Common myeloid progenitor, CD34-positive (primary cell): ENCODE measurements at regions of chr20 and their contacts with region 1.

Region 1: DNA sequence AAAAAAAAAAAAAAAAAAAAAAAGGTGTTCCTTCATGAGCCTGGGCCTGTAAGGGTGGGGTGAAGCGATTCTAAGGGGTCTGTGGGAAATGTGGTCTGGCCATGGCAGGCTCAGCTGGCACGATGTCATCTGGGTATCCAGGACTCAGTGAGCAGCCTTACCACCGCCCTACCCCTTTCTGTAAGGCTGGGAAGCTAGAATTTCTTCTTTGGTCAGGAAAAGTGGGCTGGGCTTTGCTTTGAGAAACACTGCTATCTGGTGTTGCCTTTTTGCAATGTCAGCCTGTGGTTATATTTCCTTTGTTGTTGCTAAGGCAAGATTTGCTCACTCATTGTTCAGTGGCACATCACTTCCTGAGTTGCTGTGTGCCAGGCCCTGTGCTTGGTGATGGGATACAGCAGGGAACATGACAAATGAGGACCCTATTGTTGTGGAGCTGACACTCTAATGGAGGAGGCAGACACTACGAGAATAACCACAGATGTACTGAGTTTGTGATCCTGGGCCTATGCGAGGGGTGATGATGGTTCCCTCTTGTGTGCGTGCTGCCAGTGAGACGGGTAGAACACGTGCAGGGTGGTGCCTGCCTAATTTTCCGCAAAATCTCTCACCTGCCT is 45.9 kb upstream of the ZNFX1 start:
- DNase-seq: peak; percentile 94 to 99 (median 98)
- H3K4me3 ChIP-seq: peak overlapping the region in 1 of 7 experiments; percentile 28
- H3K27ac ChIP-seq: peak overlapping the region; percentile 74 to 82
- H3K4me1 ChIP-seq: peaks cover 0 to 38% (median 21%) of the 10 kb centered on the region in 4 experiments
- H3K27me3 ChIP-seq: peaks cover 0 to 22% (median 7%) of the 10 kb centered on the region in 5 experiments

Region 2: GRCh38 chr20:48889144-48890114 is 434.3 kb before region 1 on chr20:
- CTCF ChIA-PET with region 1: no interaction called
- POLR2A ChIA-PET with region 1: no interaction called
- DNase-seq: no peak
- H3K4me3 ChIP-seq: no peak overlapping the region
- H3K27ac ChIP-seq: no peak overlapping the region
- H3K4me1 ChIP-seq: peaks cover 0 to 9% (median 0%) of the 10 kb centered on the region in 4 experiments
- H3K27me3 ChIP-seq: no peaks in the 10 kb centered on the region

Region 3: GRCh38 chr20:49063279-49063678 is 260.5 kb before region 1 on chr20:
- CTCF ChIA-PET with region 1: no interaction called
- POLR2A ChIA-PET with region 1: no interaction called
- DNase-seq: no peak
- H3K4me3 ChIP-seq: no peak overlapping the region
- H3K27ac ChIP-seq: no peak overlapping the region
- H3K4me1 ChIP-seq: no peaks in the 10 kb centered on the region
- H3K27me3 ChIP-seq: no peaks in the 10 kb centered on the region

Region 4: GRCh38 chr20:49278036-49278817 is 45.5 kb before region 1 on chr20 and contains the start of gene ZNFX1:
- CTCF ChIA-PET with region 1: interaction called, 14 read pairs
- POLR2A ChIA-PET with region 1: interaction called, 6 read pairs
- DNase-seq: peak; percentile 98 to 99 (median 99)
- H3K4me3 ChIP-seq: peak within 1 kb of the TSS; percentile 90 to 98 (median 93)
- H3K27ac ChIP-seq: peak within 1 kb of the TSS; percentile 89 to 97
- H3K4me1 ChIP-seq: peaks cover 10 to 42% (median 31%) of the 10 kb centered on the region in 4 experiments
- H3K27me3 ChIP-seq: no peaks in the 10 kb centered on the region

Region 5: GRCh38 chr20:49349694-49350093 is 26.0 kb after region 1 on chr20:
- CTCF ChIA-PET with region 1: no interaction called
- POLR2A ChIA-PET with region 1: no interaction called
- DNase-seq: no peak
- H3K4me3 ChIP-seq: no peak overlapping the region
- H3K27ac ChIP-seq: no peak overlapping the region
- H3K4me1 ChIP-seq: peaks cover 0 to 6% (median 4%) of the 10 kb centered on the region in 4 experiments
- H3K27me3 ChIP-seq: peaks cover 0 to 18% (median 2%) of the 10 kb centered on the region in 5 experiments

Region 6: DNA sequence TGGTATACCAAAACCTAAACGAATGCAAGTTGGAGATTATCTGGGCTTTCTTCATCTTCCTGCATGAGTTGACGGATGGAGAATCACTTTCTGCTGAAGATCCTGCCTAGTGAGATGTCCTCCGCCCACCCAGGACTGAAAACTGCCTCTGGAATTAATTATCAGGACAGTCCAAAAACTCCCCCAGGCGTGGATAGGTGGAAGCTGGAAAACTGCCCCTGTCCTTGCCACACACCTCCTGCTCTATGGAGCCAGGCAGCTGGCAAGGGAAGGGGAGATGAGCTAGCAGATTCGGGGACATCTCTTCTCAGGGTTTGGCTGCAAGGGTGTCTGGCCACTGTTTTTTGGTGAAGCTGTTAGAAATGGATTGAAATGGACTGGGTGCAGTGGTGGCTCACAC is 43.4 kb after region 1 on chr20:
- CTCF ChIA-PET with region 1: no interaction called
- POLR2A ChIA-PET with region 1: no interaction called
- DNase-seq: no peak
- H3K4me3 ChIP-seq: no peak overlapping the region
- H3K27ac ChIP-seq: no peak overlapping the region
- H3K4me1 ChIP-seq: no peaks in the 10 kb centered on the region
- H3K27me3 ChIP-seq: peaks cover 0 to 31% (median 5%) of the 10 kb centered on the region in 5 experiments